GM10248 (cell line): ENCODE measurements at regions of chr20 and their contacts with region 1.

Region 1: DNA sequence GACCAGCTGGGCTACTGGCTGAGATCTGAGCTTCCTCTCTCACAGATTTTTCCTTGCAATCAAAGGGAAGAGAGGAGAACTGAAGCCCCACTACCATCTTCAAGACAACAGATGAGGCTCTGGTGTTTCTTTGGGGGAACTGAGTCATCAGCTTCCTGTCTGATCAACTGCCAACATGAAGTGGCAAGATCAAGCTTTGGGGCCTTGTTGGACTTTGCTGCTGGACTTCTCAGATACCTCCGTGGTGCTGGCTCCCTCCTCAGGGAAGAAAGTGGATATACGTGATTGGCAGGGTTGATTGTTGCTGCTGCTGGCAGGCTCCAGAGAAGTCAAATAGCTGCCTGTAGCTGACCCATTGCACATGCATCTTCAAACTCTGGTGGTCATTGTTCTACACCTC is 3.6 kb upstream of the TOX2 start:
- DNase-seq: no peak
- CTCF ChIP-seq: no peak

Region 2: GRCh38 chr20:43833511-43834395 is 77.3 kb before region 1 on chr20:
- CTCF ChIA-PET with region 1: no interaction called
- POLR2A ChIA-PET with region 1: no interaction called
- DNase-seq: no peak
- CTCF ChIP-seq: no peak

Region 3: DNA sequence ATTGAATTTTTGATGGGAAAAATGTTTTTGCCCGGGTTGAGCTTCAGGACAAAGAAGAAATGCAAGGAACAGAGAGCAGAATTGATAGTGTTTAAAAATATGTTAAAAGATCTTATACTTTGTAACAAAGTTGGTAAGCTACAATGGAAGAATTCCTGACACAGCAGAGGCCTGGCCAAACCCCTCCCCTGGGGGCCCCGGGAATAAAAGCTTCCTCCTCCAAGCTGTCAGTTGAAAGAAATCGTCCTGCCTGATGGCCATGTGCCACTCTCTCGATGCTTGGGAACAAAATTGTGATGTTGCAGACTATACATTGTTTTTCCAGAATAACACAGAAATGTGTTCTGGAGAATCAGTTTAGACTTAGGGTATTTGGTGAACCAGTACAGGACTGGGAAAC is 10.6 kb before region 1 on chr20:
- CTCF ChIA-PET with region 1: interaction called, 13 read pairs
- POLR2A ChIA-PET with region 1: no interaction called
- DNase-seq: no peak
- CTCF ChIP-seq: no peak

Region 4: GRCh38 chr20:44056010-44056698 is 145.1 kb after region 1 on chr20:
- CTCF ChIA-PET with region 1: no interaction called
- POLR2A ChIA-PET with region 1: no interaction called
- DNase-seq: no peak
- CTCF ChIP-seq: peak; percentile 32